Right cardiac atrium (tissue), 5 donors: ENCODE measurements at regions of chr5 and their contacts with region 1.

Region 1: GRCh38 chr5:142133330-142134206 is 25.0 kb downstream of the NDFIP1 start:
- DNase-seq: no peak
- ATAC-seq: no peak
- H3K4me3 ChIP-seq: no peak overlapping the region
- H3K27ac ChIP-seq: no peak overlapping the region
- H3K4me1 ChIP-seq: peaks cover 6% of the 10 kb centered on the region
- H3K27me3 ChIP-seq: no peaks in the 10 kb centered on the region

Region 2: GRCh38 chr5:142000703-142001484 is 132.7 kb before region 1 on chr5:
- intact Hi-C with region 1: loop called in 1 of 4 experiments (anchors 10 kb)
- DNase-seq: no peak
- ATAC-seq: no peak
- H3K4me3 ChIP-seq: no peak overlapping the region
- H3K27ac ChIP-seq: no peak overlapping the region
- H3K4me1 ChIP-seq: no peaks in the 10 kb centered on the region
- H3K27me3 ChIP-seq: no peaks in the 10 kb centered on the region